ENCODE measurements at regions of chr7 and their contacts with region 1.

Region 1: GRCh38 chr7:90424720-90425119 is 21.5 kb downstream of the CLDN12 start:
- DNase-seq: no peak
- H3K4me3 ChIP-seq: no peak overlapping the region
- H3K27ac ChIP-seq: no peak overlapping the region
- H3K4me1 ChIP-seq: peaks cover 9% of the 10 kb centered on the region
- H3K27me3 ChIP-seq: peaks cover 0 to 2% of the 10 kb centered on the region in 2 experiments
- CTCF ChIP-seq: no peak
- POLR2A ChIP-seq: no peak

Region 2: GRCh38 chr7:88789480-88790064 is 1635.1 kb before region 1 on chr7:
- CTCF ChIA-PET with region 1: interaction called, 14 read pairs
- POLR2A ChIA-PET with region 1: no interaction called
- dilution Hi-C with region 1: no loop called
- intact Hi-C with region 1: loop called (anchors 1 kb)
- DNase-seq: peak; percentile 42
- H3K4me3 ChIP-seq: no peak overlapping the region
- H3K27ac ChIP-seq: no peak overlapping the region
- H3K4me1 ChIP-seq: no peaks in the 10 kb centered on the region
- H3K27me3 ChIP-seq: peaks cover 2 to 3% of the 10 kb centered on the region in 2 experiments
- CTCF ChIP-seq: peak; percentile 14 to 24
- POLR2A ChIP-seq: no peak

Region 3: GRCh38 chr7:90262438-90262837 is 162.3 kb before region 1 on chr7:
- CTCF ChIA-PET with region 1: interaction called, 19 read pairs
- POLR2A ChIA-PET with region 1: no interaction called
- dilution Hi-C with region 1: no loop called
- intact Hi-C with region 1: loop called (anchors 2 kb)
- DNase-seq: peak; percentile 54
- H3K4me3 ChIP-seq: no peak overlapping the region
- H3K27ac ChIP-seq: no peak overlapping the region
- H3K4me1 ChIP-seq: peaks cover 8% of the 10 kb centered on the region
- H3K27me3 ChIP-seq: no peaks in the 10 kb centered on the region
- CTCF ChIP-seq: peak in 1 of 2 donors; percentile 15
- POLR2A ChIP-seq: no peak

Region 4: DNA sequence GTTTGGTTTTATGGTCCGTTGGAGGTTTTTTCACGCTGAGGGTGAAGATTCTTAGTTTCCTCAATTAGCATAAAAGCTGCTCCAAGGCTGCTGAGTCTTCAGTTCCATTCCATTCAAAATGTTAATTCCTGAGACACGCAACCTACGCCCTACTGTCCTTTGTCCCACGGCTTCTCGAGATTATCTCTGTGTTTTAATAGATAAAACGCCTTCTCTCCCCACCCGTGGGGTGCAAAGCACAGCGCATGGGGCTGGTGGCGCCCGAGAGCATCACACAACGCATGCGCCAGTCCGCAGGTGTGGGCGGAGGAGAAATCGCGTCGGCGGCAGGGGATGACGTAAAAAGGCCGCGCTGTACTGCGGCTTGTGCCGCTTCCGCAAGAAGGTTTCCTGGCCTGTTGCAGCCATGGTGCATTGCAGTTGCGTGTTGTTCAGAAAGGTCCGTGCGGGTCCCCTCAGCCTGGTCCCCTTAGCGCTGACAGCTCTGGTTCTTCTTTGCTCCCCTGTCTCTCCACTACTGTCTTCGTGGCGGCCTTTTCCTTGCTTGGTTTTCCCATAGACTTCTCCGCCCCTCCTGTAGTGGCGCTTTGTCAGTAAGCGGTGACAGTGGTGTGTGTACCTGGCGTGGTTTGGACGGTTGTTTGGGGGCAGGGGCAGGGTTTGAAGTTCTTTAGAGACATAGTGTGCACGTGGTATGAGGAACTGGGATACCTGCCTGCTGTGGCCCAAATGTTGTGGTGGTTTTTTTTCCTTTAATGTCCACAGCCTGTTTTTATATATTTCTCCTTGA is 78.2 kb before region 1 on chr7 and contains the start of gene GTPBP10:
- CTCF ChIA-PET with region 1: interaction called, 19 read pairs
- POLR2A ChIA-PET with region 1: no interaction called
- dilution Hi-C with region 1: no loop called
- intact Hi-C with region 1: loop called (anchors 1 kb)
- DNase-seq: peak; percentile 97
- H3K4me3 ChIP-seq: peak within 1 kb of the TSS; percentile 88 to 95 (median 91)
- H3K27ac ChIP-seq: peak within 1 kb of the TSS; percentile 57
- H3K4me1 ChIP-seq: peaks cover 12% of the 10 kb centered on the region
- H3K27me3 ChIP-seq: no peaks in the 10 kb centered on the region
- CTCF ChIP-seq: peak; percentile 69 to 71
- POLR2A ChIP-seq: peak; percentile 95
- total RNA-seq, gene GTPBP10: 14.6 and 16.7 TPM in 2 replicates

Region 5: DNA sequence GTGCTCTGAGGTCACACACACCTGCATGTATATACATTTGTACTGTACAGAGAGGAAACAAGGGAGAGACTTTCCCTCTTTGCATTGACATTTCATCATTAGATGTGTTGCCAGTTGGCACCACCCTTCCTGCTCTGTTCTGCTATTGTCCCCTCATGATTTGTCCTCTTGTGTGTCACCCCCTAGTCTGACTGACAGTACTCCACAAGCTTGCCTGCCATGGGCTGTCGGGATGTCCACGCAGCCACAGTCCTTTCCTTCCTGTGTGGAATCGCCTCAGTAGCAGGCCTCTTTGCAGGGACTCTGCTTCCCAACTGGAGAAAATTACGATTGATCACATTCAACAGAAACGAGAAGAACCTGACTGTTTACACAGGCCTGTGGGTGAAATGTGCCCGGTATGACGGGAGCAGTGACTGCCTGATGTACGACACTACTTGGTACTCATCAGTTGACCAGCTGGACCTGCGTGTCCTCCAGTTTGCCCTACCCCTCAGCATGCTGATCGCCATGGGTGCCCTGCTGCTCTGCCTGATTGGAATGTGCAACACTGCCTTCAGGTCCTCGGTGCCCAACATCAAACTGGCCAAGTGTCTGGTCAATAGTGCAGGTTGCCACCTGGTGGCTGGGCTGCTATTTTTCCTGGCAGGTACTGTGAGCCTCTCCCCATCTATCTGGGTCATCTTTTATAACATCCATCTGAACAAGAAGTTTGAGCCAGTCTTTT is 12.1 kb before region 1 on chr7:
- CTCF ChIA-PET with region 1: interaction called, 32 read pairs
- POLR2A ChIA-PET with region 1: no interaction called
- dilution Hi-C with region 1: no loop called
- intact Hi-C with region 1: no loop called
- DNase-seq: no peak
- H3K4me3 ChIP-seq: no peak overlapping the region
- H3K27ac ChIP-seq: no peak overlapping the region
- H3K4me1 ChIP-seq: peaks cover 11% of the 10 kb centered on the region
- H3K27me3 ChIP-seq: peaks cover 4 to 13% of the 10 kb centered on the region in 2 experiments
- CTCF ChIP-seq: peak in 1 of 2 donors; percentile 31
- POLR2A ChIP-seq: no peak

Measured in endothelial cell of umbilical vein (primary cell).